Mucosa of descending colon (tissue), 3 donors: ENCODE measurements at regions of chr1 and their contacts with region 1.

Region 1: GRCh38 chr1:156226116-156226538 is 13.3 kb downstream of the PMF1 start:
- DNase-seq: no peak
- ATAC-seq: no peak
- H3K4me3 ChIP-seq: no peak overlapping the region
- H3K4me1 ChIP-seq: no peaks in the 10 kb centered on the region
- CTCF ChIP-seq: no peak

Region 2: DNA sequence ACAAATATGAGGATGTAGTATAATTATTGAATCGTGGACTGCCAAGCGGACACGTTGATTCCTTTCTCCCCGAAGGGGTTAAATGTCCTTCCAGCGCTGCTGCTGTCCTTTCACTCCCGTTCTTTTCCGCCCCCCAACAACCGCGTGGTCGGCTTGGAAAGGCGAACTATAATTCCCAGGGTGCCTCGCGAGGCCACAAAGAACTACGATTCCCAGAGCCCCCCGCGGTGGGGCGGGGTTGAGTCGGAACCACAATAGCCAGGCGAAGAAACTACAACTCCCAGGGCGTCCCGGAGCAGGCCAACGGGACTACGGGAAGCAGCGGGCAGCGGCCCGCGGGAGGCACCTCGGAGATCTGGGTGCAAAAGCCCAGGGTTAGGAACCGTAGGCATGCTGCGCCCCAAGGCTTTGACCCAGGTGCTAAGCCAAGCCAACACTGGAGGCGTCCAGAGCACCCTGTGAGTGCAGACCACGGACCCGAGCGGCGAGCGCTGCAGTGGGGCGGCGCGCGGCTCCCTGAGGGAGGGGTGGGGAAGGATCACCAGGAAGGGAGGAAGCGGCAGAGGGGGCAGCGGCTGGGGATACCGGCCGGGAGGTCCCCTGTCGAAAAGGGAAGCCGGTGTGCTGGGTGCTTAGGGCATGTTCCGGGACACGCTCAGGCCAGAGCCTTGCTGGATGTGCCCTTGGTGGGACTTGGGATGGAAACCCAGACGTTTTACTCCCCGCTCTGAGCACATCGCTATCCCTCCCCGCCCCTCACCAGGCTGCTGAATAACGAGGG is 171.4 kb before region 1 on chr1 and contains the start of gene LAMTOR2:
- intact Hi-C with region 1: no loop called
- DNase-seq: peak; percentile 98 to 100 (median 99)
- ATAC-seq: peak; percentile 90
- H3K4me3 ChIP-seq: peak within 1 kb of the TSS; percentile 60
- H3K4me1 ChIP-seq: peaks cover 7% of the 10 kb centered on the region
- CTCF ChIP-seq: no peak
- total RNA-seq, gene LAMTOR2: 49.8 to 73.4 (median 60.7) TPM

Region 3: DNA sequence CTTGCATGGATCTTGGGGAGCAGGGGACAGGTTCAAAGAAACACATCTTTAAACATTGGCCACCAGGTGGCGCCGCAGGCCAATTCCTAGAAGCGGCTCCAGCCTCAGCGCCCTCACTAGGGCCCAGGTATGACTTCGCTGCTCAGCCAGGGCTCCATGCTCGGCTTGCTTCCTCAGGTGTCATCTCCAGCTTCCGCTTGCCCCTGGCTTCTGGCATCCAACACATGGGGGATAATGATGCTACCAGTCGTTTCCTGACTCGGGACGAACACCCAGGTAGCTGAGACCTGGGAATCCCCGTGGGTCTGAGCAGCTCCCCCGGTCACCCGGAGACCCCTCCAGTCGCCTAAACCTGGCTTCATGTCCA is 135.3 kb before region 1 on chr1:
- intact Hi-C with region 1: loop called in 1 of 2 experiments (anchors 5 kb)
- DNase-seq: peak; percentile 87 to 92 (median 92)
- ATAC-seq: peak; percentile 92
- H3K4me3 ChIP-seq: no peak overlapping the region
- H3K4me1 ChIP-seq: peaks cover 3% of the 10 kb centered on the region
- CTCF ChIP-seq: peak; percentile 45

Region 4: GRCh38 chr1:156146020-156146768 is 79.9 kb before region 1 on chr1:
- intact Hi-C with region 1: loop called (anchors 5 kb)
- DNase-seq: peak in 2 of 3 donors; percentile 47 to 57
- ATAC-seq: peak; percentile 59
- H3K4me3 ChIP-seq: no peak overlapping the region
- H3K4me1 ChIP-seq: no peaks in the 10 kb centered on the region
- CTCF ChIP-seq: no peak